HEK293 (cell line): ENCODE measurements at regions of chr14 and their contacts with region 1.

Region 1: GRCh38 chr14:23186913-23187654 is 3.6 kb upstream of the SLC7A8 start:
- H3K4me3 ChIP-seq: no peak overlapping the region
- H3K27ac ChIP-seq: no peak overlapping the region
- H3K4me1 ChIP-seq: no peaks in the 10 kb centered on the region; the same call in 1 of the 2 replicates
- CTCF ChIP-seq: 0 out of 2 replicates have a peak, but pooled peaks have one; percentile 39

Region 2: GRCh38 chr14:23076785-23077408 is 110.2 kb before region 1 on chr14:
- CTCF ChIA-PET with region 1: interaction called, 17 read pairs
- POLR2A ChIA-PET with region 1: no interaction called
- H3K4me3 ChIP-seq: no peak overlapping the region
- H3K27ac ChIP-seq: no peak overlapping the region
- H3K4me1 ChIP-seq: peaks cover 6% of the 10 kb centered on the region; the same call in 1 of the 2 replicates
- CTCF ChIP-seq: no peak

Region 3: DNA sequence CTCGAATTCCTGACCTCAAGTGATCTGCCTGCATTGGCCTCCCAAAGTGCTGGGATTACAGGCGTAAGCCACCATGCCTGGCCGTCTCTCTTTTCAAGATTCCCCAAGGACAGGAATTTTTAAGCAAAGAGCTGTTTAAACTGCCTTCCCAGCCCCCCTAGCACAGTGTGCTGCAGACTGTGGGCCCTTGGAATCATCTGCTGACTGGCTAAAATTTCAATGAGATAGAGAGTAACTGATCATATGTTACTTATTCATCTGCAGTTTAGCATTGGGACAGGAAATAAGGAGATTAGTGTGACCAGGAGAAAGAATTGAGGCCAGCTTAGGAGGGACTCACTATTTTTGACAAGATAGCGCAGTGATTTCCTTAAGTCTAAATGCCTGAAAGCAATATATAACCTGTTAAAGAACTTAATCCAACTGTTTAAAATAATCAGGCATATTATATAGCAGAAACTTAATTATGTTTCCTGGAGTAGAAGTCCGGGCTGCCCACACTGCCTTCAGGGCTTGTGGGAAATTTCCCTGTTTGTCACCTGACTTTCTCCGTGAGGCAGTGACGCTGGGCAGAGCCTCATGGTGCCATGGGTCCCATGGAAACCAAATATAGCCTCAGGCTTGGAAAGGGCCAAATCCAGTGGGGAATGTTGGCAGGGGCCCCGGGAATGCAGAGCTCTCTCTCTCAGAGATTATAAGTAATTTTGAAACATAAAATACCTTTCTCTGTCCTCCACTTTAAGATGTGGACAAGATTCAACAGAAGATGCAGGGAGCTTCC is 45.2 kb before region 1 on chr14:
- CTCF ChIA-PET with region 1: interaction called, 19 read pairs
- POLR2A ChIA-PET with region 1: no interaction called
- H3K4me3 ChIP-seq: no peak overlapping the region
- H3K27ac ChIP-seq: no peak overlapping the region
- H3K4me1 ChIP-seq: 0 out of 2 replicates have a peak, but pooled peaks cover 2% of the 10 kb centered on the region
- CTCF ChIP-seq: no peak

Region 4: DNA sequence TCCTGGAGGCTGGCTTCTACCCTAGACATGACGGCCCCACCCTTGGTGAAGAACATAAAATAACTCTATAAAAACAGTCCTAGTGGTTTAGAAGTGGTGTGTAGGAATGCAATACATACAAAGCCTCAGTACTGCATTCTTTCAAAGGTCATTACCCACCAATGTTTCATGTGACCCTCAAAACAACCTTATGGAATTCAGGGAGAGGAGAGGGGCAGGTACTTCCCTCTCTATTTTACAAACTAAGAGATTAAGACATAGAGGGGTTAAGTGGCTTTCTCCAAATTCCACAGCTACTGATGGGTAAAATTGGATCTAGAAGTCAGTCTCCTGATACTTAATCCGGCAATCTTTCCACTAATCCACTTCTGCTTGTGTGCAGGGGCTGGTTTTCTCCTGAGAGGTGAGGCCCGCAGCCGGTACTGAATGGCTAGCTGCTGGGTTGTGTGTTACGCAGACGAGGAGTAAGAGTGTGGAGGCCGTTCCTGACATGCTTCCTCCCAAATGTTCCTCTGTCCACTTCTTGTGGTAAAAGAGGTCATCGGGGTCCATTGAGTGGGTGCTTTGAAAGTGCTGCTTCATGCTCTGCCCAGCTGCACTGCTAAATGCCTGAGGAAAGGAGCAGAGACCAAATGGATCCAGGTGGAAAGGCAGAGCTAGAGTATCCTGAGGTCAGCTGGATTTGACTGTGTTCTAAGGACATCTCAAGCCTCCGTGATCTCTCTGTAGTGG is 19.8 kb before region 1 on chr14:
- CTCF ChIA-PET with region 1: interaction called, 14 read pairs
- POLR2A ChIA-PET with region 1: no interaction called
- H3K4me3 ChIP-seq: no peak overlapping the region
- H3K27ac ChIP-seq: no peak overlapping the region
- H3K4me1 ChIP-seq: peaks cover 16% of the 10 kb centered on the region
- CTCF ChIP-seq: no peak

Region 5: DNA sequence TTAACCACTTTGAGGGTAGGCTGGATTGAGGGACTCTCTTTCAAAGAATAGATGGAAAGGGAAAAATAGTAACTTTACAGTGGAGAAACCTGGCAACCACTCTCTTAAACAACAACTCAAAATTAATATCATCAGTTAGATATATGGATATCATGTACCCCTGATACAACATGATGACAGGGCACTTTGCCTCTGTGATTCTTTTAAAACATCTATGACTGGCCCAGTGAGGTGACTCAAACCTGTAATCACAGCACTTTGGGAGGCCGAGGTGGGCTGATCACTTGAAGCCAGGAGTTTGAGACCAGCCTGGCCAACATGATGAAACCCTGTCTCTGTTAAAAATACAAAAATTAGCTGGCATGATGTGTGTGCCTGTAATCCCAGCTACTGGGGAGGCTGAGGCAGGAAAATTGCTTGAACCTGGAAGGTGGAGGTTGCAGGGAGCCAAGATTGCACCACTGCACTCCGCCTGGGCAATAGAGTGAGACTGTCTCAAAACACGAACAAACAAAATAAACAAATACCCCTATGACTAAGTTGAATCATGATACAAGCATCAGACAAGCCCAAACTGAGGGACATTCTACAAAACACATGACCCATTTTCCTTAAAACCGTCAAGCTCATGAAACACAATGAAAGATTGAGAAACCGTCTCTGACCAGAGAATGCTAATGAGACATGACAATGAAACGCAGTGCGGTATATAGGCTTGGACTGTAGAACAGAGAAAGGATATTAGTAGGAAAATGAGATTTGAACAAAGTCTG is 22.8 kb after region 1 on chr14:
- CTCF ChIA-PET with region 1: interaction called, 13 read pairs
- POLR2A ChIA-PET with region 1: no interaction called
- H3K4me3 ChIP-seq: no peak overlapping the region
- H3K27ac ChIP-seq: no peak overlapping the region
- H3K4me1 ChIP-seq: no peaks in the 10 kb centered on the region
- CTCF ChIP-seq: no peak